Endothelial cell of umbilical vein (primary cell): ENCODE measurements at regions of chr4 and their contacts with region 1.

Region 1: DNA sequence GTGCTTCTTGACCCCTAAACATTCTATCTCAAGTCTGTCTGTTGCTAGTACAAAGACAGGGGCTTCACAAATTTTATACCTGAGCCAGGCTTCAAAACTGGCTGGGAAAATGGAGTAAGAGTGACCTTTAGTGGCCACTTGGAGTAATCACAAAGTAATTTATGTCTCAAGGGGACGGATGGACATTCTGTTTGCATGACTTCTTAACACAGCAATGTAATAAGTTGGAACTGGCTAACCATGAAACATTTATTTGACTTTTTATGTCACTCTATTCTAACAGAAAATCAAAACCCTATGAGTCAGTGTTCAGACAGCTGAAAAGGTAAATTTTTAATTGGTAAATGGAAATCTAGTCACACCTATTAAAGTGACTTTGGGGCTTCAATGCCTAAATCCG is 600.6 kb downstream of the ANKRD50 start:
- DNase-seq: peak; percentile 84
- H3K4me3 ChIP-seq: no peak overlapping the region
- H3K27ac ChIP-seq: peak overlapping the region; percentile 5
- H3K4me1 ChIP-seq: peaks cover 9% of the 10 kb centered on the region
- H3K27me3 ChIP-seq: no peaks in the 10 kb centered on the region
- CTCF ChIP-seq: peak; percentile 42 to 49
- POLR2A ChIP-seq: no peak

Region 2: DNA sequence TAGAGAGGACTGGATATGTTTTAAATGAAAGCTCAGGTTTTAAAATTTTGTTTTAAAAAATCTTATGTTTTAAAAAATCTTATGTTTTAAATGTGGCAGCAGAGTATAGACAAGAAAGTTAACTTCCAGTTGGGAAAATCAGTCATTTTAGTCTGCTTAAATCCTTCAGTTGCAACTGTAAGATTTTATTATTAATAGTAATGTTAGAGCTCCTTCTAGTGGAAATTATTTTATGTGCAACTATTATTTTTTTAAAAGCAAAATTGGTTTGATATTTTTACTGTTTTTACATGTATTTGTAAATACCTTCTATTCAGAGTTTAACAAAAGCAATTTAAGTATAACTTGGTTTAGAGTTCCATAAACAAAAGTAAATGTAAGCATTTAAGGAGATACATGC is 1181.1 kb before region 1 on chr4:
- CTCF ChIA-PET with region 1: interaction called, 3 read pairs
- POLR2A ChIA-PET with region 1: no interaction called
- dilution Hi-C with region 1: no loop called
- intact Hi-C with region 1: loop called (anchors 10 kb)
- DNase-seq: peak; percentile 40
- H3K4me3 ChIP-seq: no peak overlapping the region
- H3K27ac ChIP-seq: no peak overlapping the region
- H3K4me1 ChIP-seq: no peaks in the 10 kb centered on the region
- H3K27me3 ChIP-seq: no peaks in the 10 kb centered on the region
- CTCF ChIP-seq: peak in 1 of 2 donors; percentile 25
- POLR2A ChIP-seq: no peak

Region 3: GRCh38 chr4:123396307-123397143 is 715.4 kb before region 1 on chr4 and contains the start of gene SPRY1:
- CTCF ChIA-PET with region 1: interaction called, 4 read pairs
- POLR2A ChIA-PET with region 1: no interaction called
- dilution Hi-C with region 1: no loop called
- intact Hi-C with region 1: loop called (anchors 1 kb)
- DNase-seq: peak; percentile 89
- H3K4me3 ChIP-seq: peak within 1 kb of the TSS; percentile 27 to 84 (median 49)
- H3K27ac ChIP-seq: peak within 1 kb of the TSS; percentile 53
- H3K4me1 ChIP-seq: peaks cover 15% of the 10 kb centered on the region
- H3K27me3 ChIP-seq: no peaks in the 10 kb centered on the region
- CTCF ChIP-seq: no peak
- POLR2A ChIP-seq: peak; percentile 68
- total RNA-seq, gene SPRY1: 43.7 and 59.6 TPM in 2 replicates

Region 4: DNA sequence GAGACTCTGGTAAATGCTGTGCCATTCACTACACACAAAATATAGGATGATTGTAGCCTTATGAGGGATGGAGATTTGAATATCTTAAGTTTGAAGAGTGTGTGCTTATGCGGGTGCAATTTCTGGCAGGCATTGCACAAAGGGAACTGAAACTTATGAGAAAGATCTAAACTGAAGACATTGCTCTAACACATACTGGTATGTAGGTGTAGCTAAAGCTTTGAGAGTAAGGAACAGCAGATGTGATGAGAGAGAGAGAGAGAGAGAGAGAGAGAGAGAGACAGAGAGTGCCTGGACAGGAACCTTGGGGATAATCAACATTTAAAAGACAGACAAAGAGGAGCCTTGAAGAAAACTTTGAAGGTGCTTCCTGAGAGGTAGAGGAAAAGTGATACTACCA is 335.7 kb before region 1 on chr4:
- CTCF ChIA-PET with region 1: interaction called, 79 read pairs
- POLR2A ChIA-PET with region 1: no interaction called
- dilution Hi-C with region 1: no loop called
- intact Hi-C with region 1: loop called (anchors 1 kb)
- DNase-seq: no peak
- H3K4me3 ChIP-seq: no peak overlapping the region
- H3K27ac ChIP-seq: no peak overlapping the region
- H3K4me1 ChIP-seq: peaks cover 11% of the 10 kb centered on the region
- H3K27me3 ChIP-seq: no peaks in the 10 kb centered on the region
- CTCF ChIP-seq: no peak
- POLR2A ChIP-seq: no peak

Region 5: GRCh38 chr4:123922847-123923246 is 189.1 kb before region 1 on chr4:
- CTCF ChIA-PET with region 1: no interaction called
- POLR2A ChIA-PET with region 1: no interaction called
- dilution Hi-C with region 1: no loop called
- intact Hi-C with region 1: loop called (anchors 1 kb)
- DNase-seq: peak; percentile 91
- H3K4me3 ChIP-seq: no peak overlapping the region
- H3K27ac ChIP-seq: peak overlapping the region; percentile 93
- H3K4me1 ChIP-seq: peaks cover 20% of the 10 kb centered on the region
- H3K27me3 ChIP-seq: no peaks in the 10 kb centered on the region
- CTCF ChIP-seq: no peak
- POLR2A ChIP-seq: peak; percentile 78

Region 6: DNA sequence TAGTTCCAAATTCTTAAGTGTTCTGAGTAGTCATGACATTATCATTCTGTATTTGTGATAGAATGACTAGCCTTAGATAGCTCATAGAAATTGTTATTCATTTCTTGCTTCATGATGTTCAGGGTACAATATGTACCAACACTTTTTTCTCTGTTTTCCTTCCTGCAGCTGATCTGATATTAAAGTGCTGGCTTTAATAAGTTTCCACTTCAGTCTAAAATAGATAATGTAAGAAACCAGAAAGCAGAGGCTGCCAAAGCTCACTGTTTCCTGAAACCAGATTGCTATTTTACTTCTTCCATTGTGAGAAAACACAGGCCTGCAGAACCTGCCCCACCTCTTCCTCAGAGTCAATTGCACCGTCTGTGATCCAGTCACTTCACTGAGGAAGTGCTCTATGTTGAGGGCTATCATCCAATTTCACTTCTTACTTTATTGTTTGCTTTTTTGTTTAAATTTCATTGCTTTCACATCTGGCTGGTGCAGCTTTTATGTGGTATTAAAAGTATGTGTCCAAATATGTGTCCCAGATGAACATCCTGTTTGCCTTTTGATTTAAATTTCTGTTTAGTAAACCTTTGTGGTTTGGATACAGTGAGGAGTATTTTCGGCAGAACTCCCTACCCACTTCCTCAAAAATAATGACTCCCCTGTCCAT is 51.5 kb before region 1 on chr4:
- CTCF ChIA-PET with region 1: no interaction called
- POLR2A ChIA-PET with region 1: no interaction called
- dilution Hi-C with region 1: no loop called
- intact Hi-C with region 1: loop called (anchors 1 kb)
- DNase-seq: peak; percentile 90
- H3K4me3 ChIP-seq: peak overlapping the region in 1 of 3 experiments; percentile 3
- H3K27ac ChIP-seq: peak overlapping the region; percentile 39
- H3K4me1 ChIP-seq: peaks cover 19% of the 10 kb centered on the region
- H3K27me3 ChIP-seq: no peaks in the 10 kb centered on the region
- CTCF ChIP-seq: no peak
- POLR2A ChIP-seq: no peak

Region 7: GRCh38 chr4:124167602-124168001 is 55.7 kb after region 1 on chr4:
- CTCF ChIA-PET with region 1: no interaction called
- POLR2A ChIA-PET with region 1: no interaction called
- dilution Hi-C with region 1: no loop called
- intact Hi-C with region 1: no loop called
- DNase-seq: no peak
- H3K4me3 ChIP-seq: no peak overlapping the region
- H3K27ac ChIP-seq: no peak overlapping the region
- H3K4me1 ChIP-seq: no peaks in the 10 kb centered on the region
- H3K27me3 ChIP-seq: no peaks in the 10 kb centered on the region
- CTCF ChIP-seq: no peak
- POLR2A ChIP-seq: no peak

Region 8: GRCh38 chr4:125244848-125245450 is 1133.0 kb after region 1 on chr4:
- CTCF ChIA-PET with region 1: no interaction called
- POLR2A ChIA-PET with region 1: no interaction called
- dilution Hi-C with region 1: no loop called
- intact Hi-C with region 1: loop called (anchors 10 kb)
- DNase-seq: peak; percentile 59
- H3K4me3 ChIP-seq: no peak overlapping the region
- H3K27ac ChIP-seq: no peak overlapping the region
- H3K4me1 ChIP-seq: peaks cover 11% of the 10 kb centered on the region
- H3K27me3 ChIP-seq: no peaks in the 10 kb centered on the region
- CTCF ChIP-seq: peak in 1 of 2 donors; percentile 20
- POLR2A ChIP-seq: no peak